T-cell (primary cell): ENCODE measurements at regions of chr2 and their contacts with region 1.

Region 1: GRCh38 chr2:87401726-87402345 is 346.1 kb upstream of the PLGLB2 start:
- DNase-seq: no peak
- ATAC-seq: no peak
- H3K4me3 ChIP-seq: no peak overlapping the region
- H3K4me3 Mint-ChIP-seq: no peak overlapping the region
- H3K27ac ChIP-seq: no peak overlapping the region
- H3K27ac Mint-ChIP-seq: no peak overlapping the region
- H3K4me1 ChIP-seq: no peaks in the 10 kb centered on the region
- H3K4me1 Mint-ChIP-seq: no peaks in the 10 kb centered on the region
- H3K27me3 ChIP-seq: peaks cover 0 to 4% of the 10 kb centered on the region in 2 experiments
- H3K27me3 Mint-ChIP-seq: no peaks in the 10 kb centered on the region

Region 2: GRCh38 chr2:85804583-85804982 is 1597.3 kb before region 1 on chr2:
- CTCF ChIA-PET with region 1: no interaction called
- POLR2A ChIA-PET with region 1: no interaction called
- DNase-seq: peak in 8 of 35 experiments; percentile 11 to 41 (median 16)
- ATAC-seq: peak; percentile 42 to 61 (median 50)
- H3K4me3 ChIP-seq: no peak overlapping the region
- H3K4me3 Mint-ChIP-seq: no peak overlapping the region
- H3K27ac ChIP-seq: no peak overlapping the region
- H3K27ac Mint-ChIP-seq: no peak overlapping the region
- H3K4me1 ChIP-seq: peaks cover 8% of the 10 kb centered on the region in 2 experiments
- H3K4me1 Mint-ChIP-seq: peaks cover 14% of the 10 kb centered on the region in 3 donors
- H3K27me3 ChIP-seq: peaks cover 0 to 2% of the 10 kb centered on the region in 2 experiments
- H3K27me3 Mint-ChIP-seq: peaks cover 2% of the 10 kb centered on the region in 2 donors

Region 3: DNA sequence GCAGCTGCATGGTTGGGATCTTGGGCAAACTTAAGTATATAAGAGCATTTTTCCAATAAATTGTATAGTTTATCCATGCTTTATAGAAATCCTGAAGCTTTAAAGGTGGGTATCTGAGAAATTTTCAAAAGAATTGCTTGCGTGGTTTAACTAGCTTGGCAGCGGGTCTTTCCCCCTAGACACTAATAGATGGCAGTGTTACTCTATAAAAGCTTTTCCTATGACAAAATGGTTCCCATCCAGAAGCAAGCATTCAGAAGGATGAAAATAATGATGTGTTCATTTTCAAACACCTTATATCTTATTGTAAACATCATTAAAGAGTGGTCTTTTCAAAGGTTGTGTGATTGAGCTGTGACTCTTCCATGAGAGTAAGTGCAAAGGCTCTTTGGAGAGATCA is 914.8 kb before region 1 on chr2:
- CTCF ChIA-PET with region 1: no interaction called
- POLR2A ChIA-PET with region 1: no interaction called
- DNase-seq: peak in 1 of 35 experiments; percentile 15
- ATAC-seq: peak in 1 of 4 experiments; percentile 35
- H3K4me3 ChIP-seq: no peak overlapping the region
- H3K4me3 Mint-ChIP-seq: no peak overlapping the region
- H3K27ac ChIP-seq: no peak overlapping the region
- H3K27ac Mint-ChIP-seq: peak overlapping the region in 1 of 2 donors; percentile 49
- H3K4me1 ChIP-seq: no peaks in the 10 kb centered on the region
- H3K4me1 Mint-ChIP-seq: peaks cover 0 to 9% (median 8%) of the 10 kb centered on the region in 3 donors
- H3K27me3 ChIP-seq: no peaks in the 10 kb centered on the region
- H3K27me3 Mint-ChIP-seq: no peaks in the 10 kb centered on the region

Region 4: DNA sequence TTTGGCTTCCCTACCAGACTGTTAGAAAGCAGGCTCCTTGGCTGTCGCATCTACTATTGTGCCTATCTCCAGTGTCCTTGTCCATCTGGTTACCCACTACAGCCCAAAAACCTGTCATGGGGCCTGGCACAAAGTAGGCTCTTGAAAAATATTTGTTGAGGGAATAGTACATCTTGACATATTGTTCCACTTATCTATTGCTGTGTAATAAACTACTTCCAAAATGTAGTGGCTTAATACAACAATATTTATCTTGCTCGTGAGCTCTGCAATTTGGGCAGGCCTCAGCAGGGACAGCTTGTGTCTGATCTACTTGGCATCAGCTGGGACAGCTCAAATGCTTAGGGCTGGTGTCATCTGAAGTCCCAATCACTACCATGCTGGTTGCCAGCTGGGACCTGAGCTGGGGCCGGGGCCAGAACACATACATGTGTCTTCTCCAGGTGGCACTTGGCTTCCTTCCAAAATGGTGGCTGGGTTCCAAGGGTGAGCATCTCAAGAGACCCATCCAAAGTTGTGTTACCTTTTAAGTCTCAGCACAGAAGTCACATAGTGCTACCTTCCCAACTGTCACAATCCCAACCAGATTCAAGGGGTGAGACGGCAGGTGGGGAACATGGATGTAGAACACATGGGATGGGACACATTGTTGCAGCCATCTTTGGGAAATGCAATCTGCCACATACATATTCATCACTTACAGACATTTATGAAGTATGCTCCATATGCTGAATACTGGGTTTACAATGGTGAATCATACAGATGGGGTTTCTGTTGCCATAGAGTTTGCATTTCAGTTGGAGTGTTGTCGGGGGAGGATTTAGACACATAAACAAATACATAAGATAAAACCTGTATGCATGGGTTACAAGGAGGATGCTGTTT is 916.5 kb after region 1 on chr2:
- CTCF ChIA-PET with region 1: no interaction called
- POLR2A ChIA-PET with region 1: no interaction called
- DNase-seq: no peak
- ATAC-seq: no peak
- H3K4me3 ChIP-seq: no peak overlapping the region
- H3K4me3 Mint-ChIP-seq: no peak overlapping the region
- H3K27ac ChIP-seq: no peak overlapping the region
- H3K27ac Mint-ChIP-seq: no peak overlapping the region
- H3K4me1 ChIP-seq: no peaks in the 10 kb centered on the region
- H3K4me1 Mint-ChIP-seq: no peaks in the 10 kb centered on the region
- H3K27me3 ChIP-seq: peaks cover 0 to 18% of the 10 kb centered on the region in 2 experiments
- H3K27me3 Mint-ChIP-seq: peaks cover 22 to 26% of the 10 kb centered on the region in 2 donors

Region 5: GRCh38 chr2:88500695-88501094 is 1098.9 kb after region 1 on chr2:
- CTCF ChIA-PET with region 1: no interaction called
- POLR2A ChIA-PET with region 1: interaction called in 1 of 2 experiments, 12 read pairs
- DNase-seq: no peak
- ATAC-seq: no peak
- H3K4me3 ChIP-seq: no peak overlapping the region
- H3K4me3 Mint-ChIP-seq: no peak overlapping the region
- H3K27ac ChIP-seq: no peak overlapping the region
- H3K27ac Mint-ChIP-seq: no peak overlapping the region
- H3K4me1 ChIP-seq: no peaks in the 10 kb centered on the region
- H3K4me1 Mint-ChIP-seq: no peaks in the 10 kb centered on the region
- H3K27me3 ChIP-seq: peaks cover 0 to 9% of the 10 kb centered on the region in 2 experiments
- H3K27me3 Mint-ChIP-seq: peaks cover 13 to 14% of the 10 kb centered on the region in 2 donors